ENCODE measurements at regions of chr1 and their contacts with region 1.

Region 1: GRCh38 chr1:247401310-247402119 is 14.5 kb upstream of the NLRP3 start:
- DNase-seq: no peak
- ATAC-seq: no peak
- H3K4me3 Mint-ChIP-seq: no peak overlapping the region
- H3K27ac Mint-ChIP-seq: no peak overlapping the region
- H3K4me1 Mint-ChIP-seq: peaks cover 6% of the 10 kb centered on the region
- H3K27me3 Mint-ChIP-seq: no peaks in the 10 kb centered on the region
- CTCF ChIP-seq: no peak

Region 2: DNA sequence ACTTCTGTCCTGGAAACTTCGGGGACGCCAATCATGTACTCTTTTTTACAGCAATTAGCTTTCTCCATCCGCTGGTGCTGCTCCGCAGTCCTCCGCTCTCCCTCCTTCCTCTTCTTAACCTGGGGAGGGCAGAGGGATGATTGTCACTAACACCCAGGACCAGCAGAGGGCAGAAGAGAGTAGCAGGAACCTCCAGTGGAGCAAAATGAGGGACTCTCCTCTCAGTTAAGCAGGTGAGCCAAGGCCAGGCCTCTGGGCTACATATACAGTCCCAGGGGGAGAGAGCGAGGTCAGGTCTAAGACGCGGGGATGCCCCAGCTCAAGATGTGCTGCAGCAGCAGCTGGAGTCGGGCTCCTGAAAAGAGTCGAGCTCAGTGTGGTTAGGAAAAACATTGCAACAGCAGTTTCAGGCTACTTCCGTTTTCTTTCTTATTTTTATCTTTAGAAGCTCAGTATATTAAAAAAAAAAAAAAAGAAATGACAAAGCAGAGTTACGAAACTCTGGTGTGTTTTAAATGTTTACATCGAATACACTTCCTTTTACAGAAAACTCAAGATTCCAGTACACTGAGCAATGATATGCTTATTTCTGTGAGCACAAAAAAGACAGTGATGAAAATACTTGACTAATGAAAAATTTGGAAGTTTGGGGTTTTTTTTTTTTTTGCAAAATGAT is 11.3 kb before region 1 on chr1:
- CTCF ChIA-PET with region 1: interaction called, 19 read pairs
- POLR2A ChIA-PET with region 1: interaction called, 13 read pairs
- DNase-seq: peak; percentile 89
- ATAC-seq: peak; percentile 99
- H3K4me3 Mint-ChIP-seq: no peak overlapping the region
- H3K27ac Mint-ChIP-seq: no peak overlapping the region; the same call in 1 of the 2 replicates
- H3K4me1 Mint-ChIP-seq: peaks cover 23% of the 10 kb centered on the region
- H3K27me3 Mint-ChIP-seq: peaks cover 20% of the 10 kb centered on the region
- CTCF ChIP-seq: peak; percentile 91

Region 3: DNA sequence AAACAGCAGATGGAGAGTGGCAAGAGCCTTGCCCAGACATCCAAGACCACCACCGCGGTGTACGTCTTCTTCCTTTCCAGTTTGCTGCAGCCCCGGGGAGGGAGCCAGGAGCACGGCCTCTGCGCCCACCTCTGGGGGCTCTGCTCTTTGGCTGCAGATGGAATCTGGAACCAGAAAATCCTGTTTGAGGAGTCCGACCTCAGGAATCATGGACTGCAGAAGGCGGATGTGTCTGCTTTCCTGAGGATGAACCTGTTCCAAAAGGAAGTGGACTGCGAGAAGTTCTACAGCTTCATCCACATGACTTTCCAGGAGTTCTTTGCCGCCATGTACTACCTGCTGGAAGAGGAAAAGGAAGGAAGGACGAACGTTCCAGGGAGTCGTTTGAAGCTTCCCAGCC is 23.2 kb after region 1 on chr1:
- CTCF ChIA-PET with region 1: no interaction called
- POLR2A ChIA-PET with region 1: no interaction called
- DNase-seq: no peak
- ATAC-seq: no peak
- H3K4me3 Mint-ChIP-seq: no peak overlapping the region
- H3K27ac Mint-ChIP-seq: no peak overlapping the region
- H3K4me1 Mint-ChIP-seq: peaks cover 15% of the 10 kb centered on the region
- H3K27me3 Mint-ChIP-seq: peaks cover 9% of the 10 kb centered on the region
- CTCF ChIP-seq: no peak

Region 4: DNA sequence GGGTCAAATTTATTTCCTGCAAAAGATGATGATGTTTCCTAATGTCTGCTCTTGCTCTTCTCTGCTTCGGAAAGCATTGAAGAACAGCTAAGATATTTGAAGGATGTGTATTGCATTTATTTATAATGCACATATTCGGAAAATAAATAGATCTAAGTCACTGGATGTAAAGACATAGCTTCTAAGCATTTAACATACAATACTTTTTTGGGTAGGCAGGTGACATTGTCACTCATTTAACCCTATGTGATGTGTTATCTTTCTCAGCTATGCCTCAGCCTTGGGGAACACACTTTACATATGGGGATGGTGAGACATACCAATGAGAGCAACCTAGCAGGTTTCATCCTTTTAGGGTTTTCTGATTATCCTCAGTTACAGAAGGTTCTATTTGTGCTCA is 186.5 kb after region 1 on chr1 and contains the start of gene OR2G2:
- CTCF ChIA-PET with region 1: no interaction called
- POLR2A ChIA-PET with region 1: no interaction called
- DNase-seq: no peak
- ATAC-seq: no peak
- H3K4me3 Mint-ChIP-seq: no peak within 1 kb of the TSS
- H3K27ac Mint-ChIP-seq: no peak within 1 kb of the TSS
- H3K4me1 Mint-ChIP-seq: no peaks in the 10 kb centered on the region
- H3K27me3 Mint-ChIP-seq: no peaks in the 10 kb centered on the region; the same call in 1 of the 2 replicates
- CTCF ChIP-seq: no peak
- total RNA-seq, gene OR2G2: not detected in 3 replicates